IMR-90 (cell line): ENCODE measurements at regions of chrX and their contacts with region 1.

Region 1: DNA sequence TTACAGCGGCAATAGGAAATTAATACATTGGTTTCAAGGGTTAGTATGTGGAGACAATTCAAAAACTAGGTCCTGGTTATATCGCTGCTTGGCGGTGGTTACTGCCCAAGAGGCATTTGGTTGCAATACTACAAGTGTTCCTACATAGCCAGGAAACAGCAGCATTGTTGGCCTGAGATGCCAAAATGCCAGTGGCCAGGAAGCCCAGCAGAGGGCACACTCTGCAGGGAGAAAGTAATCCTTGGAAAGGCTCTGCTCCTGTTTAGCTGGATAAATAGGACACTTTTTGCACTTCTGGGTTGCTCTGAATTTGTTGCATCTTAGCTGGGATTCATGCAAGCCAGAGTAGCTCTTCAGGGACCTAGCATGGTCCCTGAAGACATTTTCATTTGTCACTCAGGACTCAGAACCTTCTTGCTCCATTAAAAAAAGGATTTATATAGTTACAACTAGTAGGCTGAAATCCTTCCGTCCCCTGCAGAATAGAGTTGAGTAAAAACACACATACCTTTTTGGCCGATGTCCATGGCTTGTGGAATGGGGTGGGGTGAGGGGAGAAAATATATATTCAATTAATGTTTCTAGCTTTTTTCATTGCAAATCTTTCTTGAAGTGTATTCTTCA is 8.1 kb upstream of the GPR119 start:
- DNase-seq: peak; percentile 45
- ATAC-seq: peak; percentile 91
- H3K4me3 ChIP-seq: no peak overlapping the region
- H3K27ac ChIP-seq: no peak overlapping the region
- H3K4me1 ChIP-seq: no peaks in the 10 kb centered on the region
- H3K27me3 ChIP-seq: peaks cover 10% of the 10 kb centered on the region
- CTCF ChIP-seq: peak; percentile 67
- POLR2A ChIP-seq: no peak
- RAD21 ChIP-seq: peak; percentile 66

Region 2: DNA sequence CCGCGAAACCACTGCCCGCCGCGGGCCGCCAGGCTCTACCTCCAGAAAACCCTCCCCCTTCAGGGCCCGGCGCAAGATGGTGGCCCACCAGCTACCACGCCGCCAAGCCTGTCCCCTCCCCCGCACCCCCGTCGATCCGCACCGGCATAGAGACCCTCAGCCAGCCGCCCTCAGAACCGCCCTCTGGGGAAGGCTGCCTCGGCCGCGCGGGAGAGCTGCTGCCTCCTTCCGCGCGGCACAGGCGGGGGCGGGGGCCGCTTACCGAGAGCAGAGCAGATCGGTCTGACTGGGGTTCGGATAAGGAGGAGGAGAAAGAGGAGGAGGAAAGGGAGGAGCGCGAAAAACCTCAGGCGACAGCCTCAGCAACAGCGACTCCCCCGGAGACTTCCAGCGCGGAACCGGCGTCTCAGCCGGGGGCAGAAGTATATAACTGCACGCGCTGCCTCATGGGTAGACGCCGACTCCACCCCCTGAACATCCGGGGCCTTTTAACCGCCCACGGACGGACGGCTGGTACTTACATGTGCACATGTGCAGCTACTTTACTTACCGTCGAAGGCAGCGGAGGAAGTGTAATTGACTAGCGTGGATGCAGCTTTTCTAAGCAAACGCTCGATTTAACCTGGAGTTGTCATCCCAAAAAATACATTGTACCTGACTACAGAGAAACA is 124.9 kb before region 1 on chrX and contains the start of gene ZNF280C:
- CTCF ChIA-PET with region 1: no interaction called
- POLR2A ChIA-PET with region 1: no interaction called
- dilution Hi-C with region 1: no loop called
- in situ Hi-C with region 1: no loop called
- intact Hi-C with region 1: loop called (anchors 10 kb)
- DNase-seq: peak; percentile 91
- ATAC-seq: peak; percentile 97
- H3K4me3 ChIP-seq: peak within 1 kb of the TSS; percentile 91
- H3K27ac ChIP-seq: peak within 1 kb of the TSS; percentile 80
- H3K4me1 ChIP-seq: no peaks in the 10 kb centered on the region
- H3K27me3 ChIP-seq: no peaks in the 10 kb centered on the region; the same call in 1 of the 2 replicates
- CTCF ChIP-seq: peak; percentile 42
- POLR2A ChIP-seq: peak; percentile 97
- RAD21 ChIP-seq: no peak; the same call in 1 of the 2 replicates
- total RNA-seq, gene ZNF280C: 4.5 and 6.1 TPM in 2 replicates

Region 3: GRCh38 chrX:130299279-130300009 is 94.1 kb before region 1 on chrX:
- CTCF ChIA-PET with region 1: no interaction called
- POLR2A ChIA-PET with region 1: no interaction called
- dilution Hi-C with region 1: no loop called
- in situ Hi-C with region 1: loop called (anchors 25 kb)
- intact Hi-C with region 1: no loop called
- DNase-seq: no peak
- ATAC-seq: no peak
- H3K4me3 ChIP-seq: no peak overlapping the region
- H3K27ac ChIP-seq: no peak overlapping the region
- H3K4me1 ChIP-seq: peaks cover 3% of the 10 kb centered on the region; the same call in 1 of the 2 replicates
- H3K27me3 ChIP-seq: peaks cover 2% of the 10 kb centered on the region; the same call in 1 of the 2 replicates
- CTCF ChIP-seq: no peak
- POLR2A ChIP-seq: no peak
- RAD21 ChIP-seq: no peak

Region 4: DNA sequence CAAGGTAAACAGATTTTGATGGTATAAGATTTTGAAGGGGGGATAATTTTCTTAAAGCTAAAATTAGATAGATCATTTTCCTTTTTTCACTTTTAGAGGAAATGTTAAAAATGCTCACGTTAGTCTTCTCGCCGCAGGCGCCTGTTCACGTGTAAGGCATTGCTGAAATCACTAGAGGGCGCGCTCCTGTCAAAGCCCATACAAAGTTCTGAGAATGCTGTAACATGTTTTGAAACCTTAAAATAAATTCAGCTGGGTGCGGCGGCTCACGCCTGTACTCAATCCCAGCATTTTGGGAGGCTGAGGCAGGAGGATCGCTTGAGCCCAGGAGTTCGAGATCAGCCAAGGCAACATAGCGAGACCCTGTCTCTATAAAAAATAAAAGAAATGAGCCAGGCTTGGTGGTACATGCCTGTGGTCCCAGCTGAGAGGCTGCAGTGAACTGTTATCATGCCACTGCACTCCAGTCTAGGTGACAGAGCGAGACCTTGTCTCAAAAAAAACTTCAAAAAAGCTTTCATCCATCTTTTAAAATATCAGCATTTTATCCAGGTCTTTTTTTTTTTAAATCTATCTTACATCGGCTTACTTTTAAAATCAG is 146.3 kb after region 1 on chrX:
- CTCF ChIA-PET with region 1: no interaction called
- POLR2A ChIA-PET with region 1: no interaction called
- dilution Hi-C with region 1: no loop called
- in situ Hi-C with region 1: no loop called
- intact Hi-C with region 1: loop called (anchors 10 kb)
- DNase-seq: peak; percentile 45
- ATAC-seq: peak; percentile 51; the same call in 1 of the 2 replicates
- H3K4me3 ChIP-seq: no peak overlapping the region
- H3K27ac ChIP-seq: no peak overlapping the region
- H3K4me1 ChIP-seq: no peaks in the 10 kb centered on the region
- H3K27me3 ChIP-seq: peaks cover 4% of the 10 kb centered on the region
- CTCF ChIP-seq: peak; percentile 65
- POLR2A ChIP-seq: no peak
- RAD21 ChIP-seq: peak; percentile 51

Region 5: GRCh38 chrX:130575831-130576389 is 182.3 kb after region 1 on chrX:
- CTCF ChIA-PET with region 1: interaction called, 3 read pairs
- POLR2A ChIA-PET with region 1: no interaction called
- dilution Hi-C with region 1: no loop called
- in situ Hi-C with region 1: no loop called
- intact Hi-C with region 1: loop called (anchors 5 kb)
- DNase-seq: peak; percentile 33
- ATAC-seq: peak; percentile 81
- H3K4me3 ChIP-seq: no peak overlapping the region
- H3K27ac ChIP-seq: no peak overlapping the region
- H3K4me1 ChIP-seq: no peaks in the 10 kb centered on the region
- H3K27me3 ChIP-seq: peaks cover 2% of the 10 kb centered on the region; the same call in 1 of the 2 replicates
- CTCF ChIP-seq: peak; percentile 74
- POLR2A ChIP-seq: no peak
- RAD21 ChIP-seq: peak; percentile 84

Region 6: DNA sequence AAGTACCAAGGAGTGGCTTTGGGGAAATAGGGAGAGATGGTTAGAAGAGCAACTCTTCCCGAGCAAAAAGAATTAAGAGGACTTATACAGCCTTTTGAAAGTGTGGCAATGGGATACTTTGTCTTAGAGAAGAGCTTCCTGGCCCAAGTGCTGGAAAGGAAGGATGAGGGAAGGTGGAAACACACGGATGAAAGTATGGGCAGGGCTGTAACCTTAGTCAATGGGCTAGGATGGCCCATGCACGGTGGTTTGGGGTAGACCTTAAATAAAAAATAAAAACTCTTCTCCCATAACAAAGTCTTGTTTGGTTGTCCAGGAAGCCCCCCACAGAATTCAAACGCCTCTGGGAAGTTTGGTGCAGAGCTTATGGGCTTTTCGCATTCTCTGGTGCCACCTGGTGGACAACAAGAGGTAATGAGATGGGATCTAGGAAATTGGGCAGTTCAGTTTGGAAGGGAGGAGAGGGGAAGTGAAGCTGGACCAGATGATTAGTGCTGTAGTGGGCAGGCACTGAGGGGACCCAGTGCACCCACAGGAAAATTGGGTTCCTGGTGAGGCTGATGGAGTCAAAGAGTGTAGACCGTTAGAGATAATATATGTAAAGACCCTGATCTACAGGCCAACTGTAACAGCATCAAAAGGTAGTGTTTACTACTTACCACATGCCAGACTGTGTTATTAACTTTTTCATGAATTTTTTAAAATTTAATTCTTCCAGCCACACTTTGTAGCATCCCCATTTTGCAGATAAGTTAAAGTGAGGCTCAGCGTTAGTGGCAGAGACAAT is 523.3 kb after region 1 on chrX:
- CTCF ChIA-PET with region 1: interaction called, 4 read pairs
- POLR2A ChIA-PET with region 1: no interaction called
- dilution Hi-C with region 1: no loop called
- in situ Hi-C with region 1: loop called (anchors 10 kb)
- intact Hi-C with region 1: loop called (anchors 1 kb)
- DNase-seq: peak; percentile 54
- ATAC-seq: peak; percentile 75
- H3K4me3 ChIP-seq: no peak overlapping the region
- H3K27ac ChIP-seq: no peak overlapping the region
- H3K4me1 ChIP-seq: no peaks in the 10 kb centered on the region
- H3K27me3 ChIP-seq: peaks cover 2% of the 10 kb centered on the region; the same call in 1 of the 2 replicates
- CTCF ChIP-seq: peak; percentile 80
- POLR2A ChIP-seq: no peak
- RAD21 ChIP-seq: peak; percentile 91